Activated CD4-positive, alpha-beta T cell treated with anti-CD3 and anti-CD28 coated beads for 36 hours (primary cell): ENCODE measurements at regions of chr3 and their contacts with region 1.

Region 1: GRCh38 chr3:194682694-194683310 is 2.9 kb upstream of the FAM43A start:
- DNase-seq: peak; percentile 77
- ATAC-seq: peak; percentile 73
- H3K4me3 Mint-ChIP-seq: no peak overlapping the region
- H3K27ac Mint-ChIP-seq: no peak overlapping the region
- H3K4me1 Mint-ChIP-seq: peaks cover 41% of the 10 kb centered on the region
- H3K27me3 Mint-ChIP-seq: peaks cover 30% of the 10 kb centered on the region

Region 2: DNA sequence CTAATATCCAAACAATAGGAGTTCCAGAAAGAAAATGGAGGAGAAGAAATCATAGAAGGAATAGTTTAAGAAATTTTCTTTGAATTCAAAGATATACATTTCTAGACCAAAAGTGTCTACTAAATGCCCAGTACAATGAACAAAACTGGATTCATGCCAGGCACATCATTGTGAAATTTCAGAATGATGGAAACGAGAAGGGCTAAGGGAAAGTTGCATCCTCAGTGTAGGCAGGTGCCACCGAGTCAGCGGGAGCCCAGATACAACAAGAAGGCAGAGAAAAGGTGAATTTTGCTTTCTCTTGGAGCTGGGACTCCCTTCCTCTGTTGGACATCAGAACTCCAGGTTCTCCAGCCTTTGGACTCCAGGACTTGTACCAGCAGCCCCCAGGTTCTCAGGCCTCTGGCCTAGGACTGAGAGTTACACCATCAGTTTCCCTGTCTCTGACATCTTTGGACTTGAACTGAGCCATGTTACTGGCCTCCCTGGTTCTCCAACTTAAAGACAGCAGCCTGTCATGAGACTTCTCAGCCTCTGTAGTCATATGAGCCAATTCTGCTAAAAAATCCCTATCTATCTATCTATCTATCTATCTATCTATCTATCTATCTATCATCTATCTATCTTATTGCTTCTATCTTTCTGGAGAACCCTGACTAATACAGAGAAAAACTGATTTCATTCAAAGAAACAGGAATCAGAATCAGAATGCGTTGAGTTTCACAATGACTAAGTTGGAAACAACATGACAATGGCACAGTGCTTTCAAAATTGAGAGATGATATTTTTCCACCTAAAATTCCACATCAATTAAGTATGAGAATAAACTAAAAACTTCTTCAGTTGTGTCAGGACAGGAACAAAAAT is 210.6 kb after region 1 on chr3:
- CTCF ChIA-PET with region 1: interaction called, 3 read pairs
- POLR2A ChIA-PET with region 1: no interaction called
- intact Hi-C with region 1: loop called (anchors 1 to 2 kb)
- DNase-seq: peak; percentile 43
- ATAC-seq: peak; percentile 86
- H3K4me3 Mint-ChIP-seq: no peak overlapping the region
- H3K27ac Mint-ChIP-seq: no peak overlapping the region
- H3K4me1 Mint-ChIP-seq: peaks cover 11% of the 10 kb centered on the region
- H3K27me3 Mint-ChIP-seq: peaks cover 21% of the 10 kb centered on the region

Region 3: GRCh38 chr3:194985031-194985578 is 302.3 kb after region 1 on chr3:
- CTCF ChIA-PET with region 1: interaction called, 10 read pairs
- POLR2A ChIA-PET with region 1: no interaction called
- intact Hi-C with region 1: no loop called
- DNase-seq: no peak
- ATAC-seq: no peak
- H3K4me3 Mint-ChIP-seq: no peak overlapping the region
- H3K27ac Mint-ChIP-seq: no peak overlapping the region
- H3K4me1 Mint-ChIP-seq: no peaks in the 10 kb centered on the region
- H3K27me3 Mint-ChIP-seq: peaks cover 16% of the 10 kb centered on the region

Region 4: GRCh38 chr3:195129644-195130492 is 447.1 kb after region 1 on chr3:
- CTCF ChIA-PET with region 1: interaction called, 5 read pairs
- POLR2A ChIA-PET with region 1: no interaction called
- intact Hi-C with region 1: loop called in 1 of 2 experiments (anchors 5 kb)
- DNase-seq: peak; percentile 64
- ATAC-seq: peak; percentile 67
- H3K4me3 Mint-ChIP-seq: peak overlapping the region; percentile 54
- H3K27ac Mint-ChIP-seq: peak overlapping the region; percentile 90
- H3K4me1 Mint-ChIP-seq: peaks cover 39% of the 10 kb centered on the region
- H3K27me3 Mint-ChIP-seq: no peaks in the 10 kb centered on the region

Region 5: GRCh38 chr3:195271116-195271858 is 588.5 kb after region 1 on chr3 and contains the start of gene XXYLT1:
- CTCF ChIA-PET with region 1: interaction called, 6 read pairs
- POLR2A ChIA-PET with region 1: interaction called, 7 read pairs
- intact Hi-C with region 1: loop called in 1 of 2 experiments (anchors 2 kb)
- DNase-seq: peak; percentile 96
- ATAC-seq: peak; percentile 86
- H3K4me3 Mint-ChIP-seq: peak within 1 kb of the TSS; percentile 84
- H3K27ac Mint-ChIP-seq: peak within 1 kb of the TSS; percentile 87
- H3K4me1 Mint-ChIP-seq: peaks cover 17% of the 10 kb centered on the region
- H3K27me3 Mint-ChIP-seq: no peaks in the 10 kb centered on the region
- total RNA-seq, gene XXYLT1: 5.4 to 5.7 TPM

Region 6: DNA sequence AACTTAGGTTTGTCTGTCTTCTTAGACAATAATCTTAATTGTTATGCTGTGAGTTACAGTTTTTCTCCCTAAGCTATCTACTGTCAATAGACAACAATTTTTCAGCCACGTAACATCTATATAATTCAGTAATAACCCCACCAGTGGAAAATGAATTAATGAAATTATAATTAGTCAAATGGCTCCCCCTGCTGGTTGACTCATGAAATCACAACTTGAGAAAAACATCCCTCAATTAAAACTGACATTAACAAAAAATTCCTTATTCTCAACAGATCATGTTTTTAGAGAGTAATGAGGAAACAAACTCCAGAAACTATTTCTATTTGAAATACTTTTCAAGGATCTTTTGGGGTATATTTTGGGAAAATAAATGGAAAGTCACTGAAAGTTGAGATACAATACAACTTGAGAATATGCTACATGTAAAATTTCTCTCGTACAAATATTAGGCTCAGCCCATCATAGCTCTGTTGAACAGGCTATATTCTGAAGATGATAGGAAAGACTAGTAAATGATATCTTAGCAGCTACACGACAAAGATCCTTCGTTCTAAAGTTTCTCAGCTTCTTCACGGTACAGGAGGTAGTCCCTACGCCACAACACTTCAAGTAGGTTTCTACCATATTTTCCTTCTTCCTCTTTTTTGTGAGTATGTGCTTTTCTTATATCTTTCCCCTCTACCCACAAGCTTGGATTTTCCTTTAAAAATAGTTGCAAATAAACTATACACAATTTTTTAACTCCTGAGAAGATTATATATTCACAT is 839.6 kb after region 1 on chr3:
- CTCF ChIA-PET with region 1: interaction called, 3 read pairs
- POLR2A ChIA-PET with region 1: no interaction called
- intact Hi-C with region 1: loop called (anchors 5 to 10 kb)
- DNase-seq: peak; percentile 31
- ATAC-seq: no peak
- H3K4me3 Mint-ChIP-seq: no peak overlapping the region
- H3K27ac Mint-ChIP-seq: peak overlapping the region; percentile 59
- H3K4me1 Mint-ChIP-seq: peaks cover 42% of the 10 kb centered on the region
- H3K27me3 Mint-ChIP-seq: no peaks in the 10 kb centered on the region